MCF 10A (cell line): ENCODE measurements at regions of chr13 and their contacts with region 1.

Region 1: GRCh38 chr13:73708393-73708985 is 425.7 kb downstream of the KLF12 start:
- DNase-seq: peak; percentile 84
- H3K4me3 Mint-ChIP-seq: no peak overlapping the region
- H3K27ac Mint-ChIP-seq: no peak overlapping the region
- H3K4me1 Mint-ChIP-seq: peaks cover 22% of the 10 kb centered on the region
- H3K27me3 Mint-ChIP-seq: no peaks in the 10 kb centered on the region
- CTCF ChIP-seq: peak; percentile 92

Region 2: GRCh38 chr13:72643311-72643989 is 1065.0 kb before region 1 on chr13:
- CTCF ChIA-PET with region 1: no interaction called
- POLR2A ChIA-PET with region 1: no interaction called
- intact Hi-C with region 1: loop called (anchors 10 kb)
- DNase-seq: peak; percentile 59
- H3K4me3 Mint-ChIP-seq: no peak overlapping the region
- H3K27ac Mint-ChIP-seq: no peak overlapping the region
- H3K4me1 Mint-ChIP-seq: peaks cover 3% of the 10 kb centered on the region
- H3K27me3 Mint-ChIP-seq: peaks cover 56% of the 10 kb centered on the region
- CTCF ChIP-seq: peak; percentile 67

Region 3: GRCh38 chr13:72808917-72809500 is 899.5 kb before region 1 on chr13:
- CTCF ChIA-PET with region 1: interaction called, 5 read pairs
- POLR2A ChIA-PET with region 1: no interaction called
- intact Hi-C with region 1: loop called (anchors 10 kb)
- DNase-seq: peak; percentile 42
- H3K4me3 Mint-ChIP-seq: no peak overlapping the region
- H3K27ac Mint-ChIP-seq: no peak overlapping the region
- H3K4me1 Mint-ChIP-seq: peaks cover 6% of the 10 kb centered on the region
- H3K27me3 Mint-ChIP-seq: no peaks in the 10 kb centered on the region
- CTCF ChIP-seq: peak; percentile 30

Region 4: DNA sequence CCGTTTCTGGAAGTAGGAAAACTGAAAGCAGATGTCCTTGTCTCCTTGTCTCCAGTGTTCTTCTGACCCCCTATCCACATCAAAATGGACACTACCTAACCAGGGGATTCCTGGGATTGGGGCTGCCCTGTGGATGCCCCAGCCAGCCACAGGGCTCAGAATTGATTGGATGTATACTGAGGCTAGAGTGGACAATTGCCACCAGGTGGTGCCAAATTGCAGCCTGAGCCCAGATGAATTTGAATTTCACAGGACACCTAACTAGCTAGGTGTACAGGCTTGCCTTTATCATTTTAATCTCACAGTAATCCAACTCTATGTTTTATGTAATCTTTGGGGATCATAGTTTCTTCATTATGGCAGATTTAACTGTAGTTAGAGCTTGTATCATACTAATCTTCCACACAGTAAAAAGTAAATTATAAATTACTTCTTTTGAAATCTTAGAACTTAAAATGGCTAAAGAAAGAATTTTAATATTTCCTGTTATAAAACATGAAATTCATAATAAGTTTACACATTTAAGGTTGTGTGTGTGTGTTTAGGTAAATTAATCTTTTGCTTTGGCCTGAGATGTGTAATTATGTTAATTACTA is 868.6 kb before region 1 on chr13:
- CTCF ChIA-PET with region 1: interaction called, 15 read pairs
- POLR2A ChIA-PET with region 1: no interaction called
- intact Hi-C with region 1: loop called (anchors 1 kb)
- DNase-seq: peak; percentile 80
- H3K4me3 Mint-ChIP-seq: no peak overlapping the region
- H3K27ac Mint-ChIP-seq: no peak overlapping the region
- H3K4me1 Mint-ChIP-seq: peaks cover 5% of the 10 kb centered on the region
- H3K27me3 Mint-ChIP-seq: no peaks in the 10 kb centered on the region
- CTCF ChIP-seq: peak; percentile 84

Region 5: DNA sequence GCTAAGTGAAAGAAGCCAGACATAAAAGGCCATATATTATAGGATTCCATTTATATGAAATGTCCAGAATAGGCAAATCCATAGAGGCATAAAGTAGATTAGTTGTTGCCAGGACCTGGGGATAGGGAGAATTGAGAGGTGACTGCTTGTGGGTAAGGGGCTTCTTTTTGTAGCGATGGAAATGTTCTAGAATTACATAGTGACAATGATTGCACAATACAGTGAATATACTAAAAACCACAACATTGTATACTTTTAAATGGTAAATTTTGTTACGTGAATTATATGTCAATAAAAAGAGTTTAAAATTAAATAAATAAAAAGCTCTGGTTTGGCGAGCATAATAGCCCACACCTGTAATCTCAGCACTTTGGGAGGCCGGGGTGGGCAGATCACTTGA is 61.1 kb before region 1 on chr13:
- CTCF ChIA-PET with region 1: no interaction called
- POLR2A ChIA-PET with region 1: no interaction called
- intact Hi-C with region 1: no loop called
- DNase-seq: no peak
- H3K4me3 Mint-ChIP-seq: no peak overlapping the region
- H3K27ac Mint-ChIP-seq: no peak overlapping the region
- H3K4me1 Mint-ChIP-seq: no peaks in the 10 kb centered on the region
- H3K27me3 Mint-ChIP-seq: no peaks in the 10 kb centered on the region
- CTCF ChIP-seq: no peak

Region 6: GRCh38 chr13:74336546-74336945 is 628.1 kb after region 1 on chr13:
- CTCF ChIA-PET with region 1: no interaction called
- POLR2A ChIA-PET with region 1: no interaction called
- intact Hi-C with region 1: no loop called
- DNase-seq: no peak
- H3K4me3 Mint-ChIP-seq: no peak overlapping the region
- H3K27ac Mint-ChIP-seq: no peak overlapping the region
- H3K4me1 Mint-ChIP-seq: no peaks in the 10 kb centered on the region
- H3K27me3 Mint-ChIP-seq: no peaks in the 10 kb centered on the region
- CTCF ChIP-seq: no peak